ENCODE measurements at regions of chrX and their contacts with region 1.

Region 1: DNA sequence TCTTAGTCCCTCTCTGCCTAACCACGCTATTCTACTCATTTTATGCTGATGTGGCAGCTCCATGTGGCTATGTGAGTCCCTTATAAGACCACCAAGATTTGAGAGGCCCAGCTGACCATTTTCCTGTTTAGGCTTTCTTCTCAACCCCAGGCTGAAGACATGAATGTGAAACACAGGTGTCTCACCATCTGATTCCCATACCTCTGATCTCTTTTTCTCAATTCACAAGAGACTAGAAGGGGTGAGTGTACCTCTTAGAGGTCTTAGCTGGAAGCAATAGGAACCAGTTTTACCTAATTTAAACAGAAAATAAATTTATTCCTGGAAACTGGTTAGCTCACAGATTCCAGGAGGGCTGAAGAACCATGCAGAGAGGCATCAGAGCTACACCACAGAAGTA is 276.5 kb upstream of the FMR1 start:
- DNase-seq: no peak

Region 2: GRCh38 chrX:147675819-147676218 is 40.6 kb after region 1 on chrX:
- intact Hi-C with region 1: loop called in 1 of 2 experiments (anchors 2 kb)
- DNase-seq: no peak

Measured in posterior vena cava (tissue), 2 donors.